ENCODE measurements at regions of chr10 and their contacts with region 1.

Region 1: GRCh38 chr10:128011175-128011979 is 104.5 kb downstream of the PTPRE start:
- DNase-seq: peak; percentile 89
- ATAC-seq: peak; percentile 91

Region 2: DNA sequence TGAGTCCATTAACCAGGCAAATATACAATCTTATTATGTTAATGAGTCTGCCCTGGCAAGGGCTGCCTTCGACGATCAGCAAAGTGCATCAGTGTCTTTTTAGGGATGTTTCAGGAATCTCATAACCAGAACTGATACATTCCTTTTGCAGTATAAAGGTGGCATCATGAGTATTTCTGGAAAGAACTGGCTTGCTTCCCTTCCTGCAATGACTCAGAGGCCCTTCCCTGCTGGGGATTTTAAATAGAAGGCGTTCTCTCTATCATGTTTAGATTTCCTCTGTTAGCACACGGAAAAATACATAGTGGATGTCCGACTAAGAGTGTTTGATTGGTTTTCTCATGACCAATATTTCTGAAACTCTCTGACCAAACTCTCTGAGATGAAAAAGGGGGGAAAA is 460.5 kb before region 1 on chr10:
- intact Hi-C with region 1: no loop called
- DNase-seq: no peak
- ATAC-seq: no peak

Region 3: DNA sequence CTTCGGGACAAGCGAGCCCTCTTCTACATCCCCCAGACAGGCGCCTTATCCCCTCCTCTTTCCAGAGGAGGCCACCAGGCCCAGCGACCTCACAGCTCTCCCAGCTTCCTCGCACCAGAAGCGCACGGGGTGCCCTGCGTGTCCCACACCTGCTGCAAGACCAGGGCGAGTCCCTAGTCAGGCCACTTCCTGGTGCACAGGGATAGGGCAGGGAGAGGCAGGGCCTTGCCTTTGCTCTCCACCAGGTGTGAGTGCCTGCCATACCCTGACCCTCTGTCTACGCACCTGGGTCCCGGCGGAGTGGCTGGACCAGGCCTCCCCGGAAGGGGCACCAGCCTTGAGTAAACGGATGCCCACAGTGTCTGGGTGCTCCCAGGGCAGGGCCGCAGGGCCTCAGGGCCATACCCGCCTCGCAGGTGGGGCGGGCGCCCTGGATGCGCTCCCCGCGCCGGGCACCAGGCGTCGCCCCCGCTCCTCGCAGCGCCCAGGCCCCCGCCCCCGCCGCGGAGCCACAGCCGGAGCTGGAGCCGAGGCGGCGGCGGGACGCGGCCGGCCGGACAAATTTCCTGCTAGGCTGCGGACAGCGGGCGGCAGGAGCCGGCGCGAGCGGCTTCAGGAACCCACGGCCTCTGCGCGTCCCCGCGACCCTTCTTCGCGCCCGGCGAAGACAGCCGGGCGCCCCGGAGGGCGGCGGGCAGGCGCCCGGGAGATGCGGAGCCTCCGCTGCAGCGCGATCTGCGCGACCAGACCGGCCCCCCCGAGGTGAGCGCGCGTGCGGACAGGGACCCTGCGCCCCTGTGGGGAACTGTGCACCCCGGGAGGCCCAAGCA is 104.6 kb before region 1 on chr10 and contains the start of gene PTPRE:
- intact Hi-C with region 1: loop called (anchors 2 kb)
- DNase-seq: peak; percentile 88
- ATAC-seq: peak; percentile 94
- total RNA-seq, gene PTPRE: 16.0 TPM

Region 4: GRCh38 chr10:127919418-127920271 is 91.7 kb before region 1 on chr10:
- intact Hi-C with region 1: no loop called
- DNase-seq: no peak
- ATAC-seq: no peak

Region 5: GRCh38 chr10:128324077-128324827 is 312.9 kb after region 1 on chr10:
- intact Hi-C with region 1: no loop called
- DNase-seq: peak; percentile 73
- ATAC-seq: peak; percentile 96

Measured in Right ventricle myocardium superior (tissue), 1 donor.